ENCODE measurements at regions of chr6 and their contacts with region 1.

Region 1: GRCh38 chr6:151475653-151476523 is 17.9 kb upstream of the CCDC170 start:
- DNase-seq: peak in 1 of 10 donors; percentile 25
- H3K4me3 ChIP-seq: peak overlapping the region in 17 of 59 donors; percentile 1 to 38 (median 20)
- H3K27ac ChIP-seq: no peak overlapping the region
- H3K27me3 ChIP-seq: no peaks in the 10 kb centered on the region
- CTCF ChIP-seq: peak; percentile 66 to 99 (median 84)

Region 2: DNA sequence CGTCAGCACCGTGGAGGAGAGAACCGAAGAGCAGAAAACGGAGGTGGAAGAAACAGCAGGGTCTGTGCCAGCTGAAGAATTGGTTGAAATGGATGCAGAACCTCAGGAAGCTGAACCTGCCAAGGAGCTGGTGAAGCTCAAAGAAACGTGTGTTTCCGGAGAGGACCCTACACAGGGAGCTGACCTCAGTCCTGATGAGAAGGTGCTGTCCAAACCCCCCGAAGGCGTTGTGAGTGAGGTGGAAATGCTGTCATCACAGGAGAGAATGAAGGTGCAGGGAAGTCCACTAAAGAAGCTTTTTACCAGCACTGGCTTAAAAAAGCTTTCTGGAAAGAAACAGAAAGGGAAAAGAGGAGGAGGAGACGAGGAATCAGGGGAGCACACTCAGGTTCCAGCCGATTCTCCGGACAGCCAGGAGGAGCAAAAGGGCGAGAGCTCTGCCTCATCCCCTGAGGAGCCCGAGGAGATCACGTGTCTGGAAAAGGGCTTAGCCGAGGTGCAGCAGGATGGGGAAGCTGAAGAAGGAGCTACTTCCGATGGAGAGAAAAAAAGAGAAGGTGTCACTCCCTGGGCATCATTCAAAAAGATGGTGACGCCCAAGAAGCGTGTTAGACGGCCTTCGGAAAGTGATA is 126.1 kb before region 1 on chr6:
- intact Hi-C with region 1: no loop called
- DNase-seq: no peak
- H3K4me3 ChIP-seq: peak overlapping the region in 1 of 59 donors; percentile 27
- H3K27ac ChIP-seq: no peak overlapping the region
- H3K27me3 ChIP-seq: no peaks in the 10 kb centered on the region
- CTCF ChIP-seq: no peak

Region 3: GRCh38 chr6:151390276-151391032 is 85.4 kb before region 1 on chr6:
- intact Hi-C with region 1: loop called in 1 of 2 experiments (anchors 5 kb)
- DNase-seq: peak; percentile 88 to 98 (median 96)
- H3K4me3 ChIP-seq: peak overlapping the region; percentile 49 to 99 (median 94)
- H3K27ac ChIP-seq: peak overlapping the region; percentile 93 to 100 (median 99)
- H3K27me3 ChIP-seq: no peaks in the 10 kb centered on the region
- CTCF ChIP-seq: peak in 13 of 56 donors; percentile 2 to 33 (median 16)

Region 4: DNA sequence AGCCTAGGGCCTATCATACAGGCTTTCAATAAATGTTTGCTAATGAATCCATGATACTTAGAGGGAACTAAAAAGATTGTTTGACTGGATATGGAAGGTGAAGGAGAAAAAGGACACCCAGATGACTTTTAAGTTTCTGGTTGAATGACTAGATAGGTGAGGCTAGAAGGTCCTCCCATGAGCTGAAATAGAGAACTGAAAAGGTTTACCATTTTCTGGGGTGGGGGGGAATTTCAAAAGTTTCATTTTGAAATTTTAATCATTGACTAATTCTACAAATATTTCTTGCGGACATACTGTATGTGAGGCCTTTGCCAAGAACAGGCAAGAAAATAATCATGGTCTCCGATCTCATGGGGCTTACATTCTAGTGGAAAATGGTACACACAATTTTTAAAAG is 66.6 kb before region 1 on chr6:
- intact Hi-C with region 1: loop called in 1 of 2 experiments (anchors 5 kb)
- DNase-seq: no peak
- H3K4me3 ChIP-seq: no peak overlapping the region
- H3K27ac ChIP-seq: peak overlapping the region in 3 of 59 donors; percentile 7 to 26 (median 13)
- H3K27me3 ChIP-seq: no peaks in the 10 kb centered on the region
- CTCF ChIP-seq: no peak

Region 5: GRCh38 chr6:151430886-151431285 is 45.0 kb before region 1 on chr6:
- intact Hi-C with region 1: no loop called
- DNase-seq: no peak
- H3K4me3 ChIP-seq: no peak overlapping the region
- H3K27ac ChIP-seq: no peak overlapping the region
- H3K27me3 ChIP-seq: no peaks in the 10 kb centered on the region
- CTCF ChIP-seq: no peak

Region 6: GRCh38 chr6:151440930-151441329 is 35.0 kb before region 1 on chr6:
- intact Hi-C with region 1: loop called in 1 of 2 experiments (anchors 5 kb)
- DNase-seq: no peak
- H3K4me3 ChIP-seq: peak overlapping the region in 2 of 59 donors; percentile 1 to 2
- H3K27ac ChIP-seq: peak overlapping the region in 7 of 59 donors; percentile 1 to 34 (median 8)
- H3K27me3 ChIP-seq: no peaks in the 10 kb centered on the region
- CTCF ChIP-seq: peak in 53 of 56 donors; percentile 28 to 75 (median 51)